Left cardiac atrium (tissue), 4 donors: ENCODE measurements at regions of chr6 and their contacts with region 1.

Region 1: DNA sequence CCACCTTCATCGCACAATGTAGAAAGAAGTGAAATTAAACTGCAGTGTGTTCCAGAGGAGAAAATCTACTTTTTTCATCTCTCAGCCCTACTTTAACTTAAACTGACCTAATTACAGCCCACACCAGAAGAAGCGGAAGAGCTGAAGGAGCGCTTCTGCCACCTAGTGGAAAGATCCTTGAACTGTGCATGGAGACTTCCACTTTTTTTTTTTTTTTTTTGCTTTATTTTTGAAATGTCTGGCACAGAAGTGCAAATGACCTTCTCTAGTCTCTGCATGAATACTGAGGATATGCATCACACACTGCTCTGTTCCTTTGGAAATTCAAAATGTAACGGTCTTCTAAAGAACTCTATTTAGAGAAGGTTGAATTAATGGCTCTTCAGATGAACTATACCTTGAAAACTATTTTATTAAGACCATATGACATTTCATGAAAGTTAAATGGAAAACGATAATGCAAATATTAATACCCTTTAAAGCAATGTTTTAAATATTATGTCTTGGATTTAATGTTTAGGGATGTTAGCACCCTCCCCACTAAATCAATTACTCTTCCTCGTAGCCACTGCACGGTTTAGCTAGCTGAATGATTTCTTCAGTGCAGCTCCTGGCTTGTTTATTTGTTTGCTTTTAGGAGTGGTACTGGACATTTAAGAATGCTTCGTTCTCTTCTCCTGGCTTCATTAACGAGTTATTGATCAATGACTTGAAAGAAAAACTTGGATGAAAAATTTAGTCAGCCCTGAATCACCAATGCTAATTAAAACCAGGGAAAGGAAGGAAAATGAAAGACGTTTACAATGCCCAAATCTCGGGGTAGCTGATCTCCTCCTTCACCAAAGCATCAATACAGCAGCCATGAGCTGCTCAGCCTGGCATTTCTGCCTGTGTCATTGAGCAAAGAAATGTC is 569.6 kb upstream of the GJE1 start:
- DNase-seq: peak; percentile 53
- ATAC-seq: peak; percentile 92 to 96

Region 2: DNA sequence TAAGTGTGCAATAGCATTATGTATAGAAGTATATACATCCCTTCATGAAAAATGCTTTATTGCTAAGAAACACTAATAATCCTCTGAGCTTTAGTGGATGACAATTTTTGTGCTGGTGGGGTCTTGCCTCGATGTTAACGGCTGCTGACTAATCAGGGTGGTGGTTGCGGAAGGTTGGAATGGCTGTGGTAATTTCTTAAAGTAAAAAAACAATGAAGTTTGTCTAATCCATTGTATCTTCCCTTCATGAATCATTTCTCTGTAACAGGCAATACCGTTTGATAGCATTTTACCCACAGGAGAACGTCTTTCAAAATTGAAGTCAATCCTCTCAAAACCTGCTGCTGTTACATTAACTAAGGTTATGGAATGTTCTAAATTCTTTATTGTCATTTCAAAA is 246.9 kb before region 1 on chr6:
- intact Hi-C with region 1: loop called in 1 of 2 experiments (anchors 5 kb)
- DNase-seq: no peak
- ATAC-seq: no peak

Region 3: GRCh38 chr6:141624301-141624700 is 61.2 kb after region 1 on chr6:
- intact Hi-C with region 1: no loop called
- DNase-seq: no peak
- ATAC-seq: no peak

Region 4: GRCh38 chr6:142002825-142003405 is 439.8 kb after region 1 on chr6:
- intact Hi-C with region 1: no loop called
- DNase-seq: no peak
- ATAC-seq: no peak